Calu3 (cell line): ENCODE measurements at regions of chr7 and their contacts with region 1.

Region 1: GRCh38 chr7:10412422-10413019 is 561.2 kb upstream of the PHF14 start:
- DNase-seq: peak; percentile 49
- H3K4me3 Mint-ChIP-seq: no peak overlapping the region
- H3K27ac Mint-ChIP-seq: no peak overlapping the region
- H3K4me1 Mint-ChIP-seq: no peaks in the 10 kb centered on the region
- H3K27me3 Mint-ChIP-seq: no peaks in the 10 kb centered on the region
- CTCF ChIP-seq: peak; percentile 50

Region 2: GRCh38 chr7:10022957-10023356 is 389.6 kb before region 1 on chr7:
- CTCF ChIA-PET with region 1: interaction called, 3 read pairs
- intact Hi-C with region 1: loop called (anchors 2 kb)
- DNase-seq: peak; percentile 73
- H3K4me3 Mint-ChIP-seq: peak overlapping the region; percentile 46
- H3K27ac Mint-ChIP-seq: peak overlapping the region; percentile 80
- H3K4me1 Mint-ChIP-seq: peaks cover 9% of the 10 kb centered on the region
- H3K27me3 Mint-ChIP-seq: no peaks in the 10 kb centered on the region
- CTCF ChIP-seq: no peak

Region 3: GRCh38 chr7:10128748-10129147 is 283.8 kb before region 1 on chr7:
- CTCF ChIA-PET with region 1: interaction called, 5 read pairs
- intact Hi-C with region 1: loop called (anchors 5 kb)
- DNase-seq: peak; percentile 56
- H3K4me3 Mint-ChIP-seq: no peak overlapping the region
- H3K27ac Mint-ChIP-seq: no peak overlapping the region
- H3K4me1 Mint-ChIP-seq: no peaks in the 10 kb centered on the region
- H3K27me3 Mint-ChIP-seq: no peaks in the 10 kb centered on the region
- CTCF ChIP-seq: peak; percentile 58

Region 4: GRCh38 chr7:10308276-10308675 is 104.2 kb before region 1 on chr7:
- CTCF ChIA-PET with region 1: no interaction called
- intact Hi-C with region 1: loop called (anchors 5 kb)
- DNase-seq: no peak
- H3K4me3 Mint-ChIP-seq: no peak overlapping the region
- H3K27ac Mint-ChIP-seq: peak overlapping the region; percentile 61
- H3K4me1 Mint-ChIP-seq: peaks cover 56% of the 10 kb centered on the region
- H3K27me3 Mint-ChIP-seq: no peaks in the 10 kb centered on the region
- CTCF ChIP-seq: no peak

Region 5: GRCh38 chr7:10708447-10708846 is 295.9 kb after region 1 on chr7:
- CTCF ChIA-PET with region 1: no interaction called
- intact Hi-C with region 1: loop called (anchors 10 kb)
- DNase-seq: peak; percentile 48
- H3K4me3 Mint-ChIP-seq: no peak overlapping the region
- H3K27ac Mint-ChIP-seq: no peak overlapping the region
- H3K4me1 Mint-ChIP-seq: peaks cover 9% of the 10 kb centered on the region
- H3K27me3 Mint-ChIP-seq: no peaks in the 10 kb centered on the region
- CTCF ChIP-seq: peak; percentile 27

Region 6: GRCh38 chr7:10718768-10719167 is 306.2 kb after region 1 on chr7:
- CTCF ChIA-PET with region 1: no interaction called
- intact Hi-C with region 1: no loop called
- DNase-seq: no peak
- H3K4me3 Mint-ChIP-seq: no peak overlapping the region
- H3K27ac Mint-ChIP-seq: no peak overlapping the region
- H3K4me1 Mint-ChIP-seq: no peaks in the 10 kb centered on the region
- H3K27me3 Mint-ChIP-seq: no peaks in the 10 kb centered on the region
- CTCF ChIP-seq: no peak

Region 7: GRCh38 chr7:10889266-10889898 is 476.9 kb after region 1 on chr7:
- CTCF ChIA-PET with region 1: no interaction called
- intact Hi-C with region 1: loop called (anchors 10 kb)
- DNase-seq: peak; percentile 39
- H3K4me3 Mint-ChIP-seq: no peak overlapping the region
- H3K27ac Mint-ChIP-seq: no peak overlapping the region
- H3K4me1 Mint-ChIP-seq: no peaks in the 10 kb centered on the region
- H3K27me3 Mint-ChIP-seq: no peaks in the 10 kb centered on the region
- CTCF ChIP-seq: peak; percentile 68